HepG2 (cell line): ENCODE measurements at regions of chr6 and their contacts with region 1.

Region 1: GRCh38 chr6:47073125-47074110 is 31.3 kb upstream of the ADGRF1 start:
- DNase-seq: peak; percentile 99
- ATAC-seq: peak; percentile 75
- H3K4me3 ChIP-seq: peak overlapping the region in 1 of 3 experiments; percentile 6; a peak in 1 of 6 replicates
- H3K27ac ChIP-seq: peak overlapping the region; percentile 93
- H3K4me1 ChIP-seq: peaks cover 73% of the 10 kb centered on the region
- H3K27me3 ChIP-seq: no peaks in the 10 kb centered on the region
- CTCF ChIP-seq: peak; percentile 77
- EP300 ChIP-seq: peak; percentile 98 to 100
- POLR2A ChIP-seq: no peak
- RAD21 ChIP-seq: peak; percentile 64

Region 2: DNA sequence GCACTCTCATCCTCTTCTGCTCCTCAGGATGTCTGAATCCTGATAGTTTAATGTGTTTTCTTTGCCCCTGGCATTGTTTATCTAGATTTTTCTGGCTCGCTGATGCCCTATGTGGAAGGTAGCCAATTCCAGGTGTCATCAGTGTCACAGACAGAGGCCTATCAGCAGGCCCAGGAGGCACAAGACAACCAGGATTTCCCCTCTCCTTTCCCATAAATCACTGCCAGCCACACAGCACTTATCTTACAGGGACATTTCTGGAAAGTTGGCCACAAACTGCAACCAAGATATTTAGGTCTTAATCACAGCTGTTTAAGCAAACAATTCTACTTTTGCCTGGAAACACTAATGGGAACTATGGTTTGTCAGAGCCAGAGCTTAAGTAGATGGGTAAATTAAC is 179.8 kb before region 1 on chr6:
- CTCF ChIA-PET with region 1: no interaction called
- POLR2A ChIA-PET with region 1: no interaction called
- in situ Hi-C with region 1: no loop called
- intact Hi-C with region 1: no loop called
- DNase-seq: no peak
- ATAC-seq: no peak
- H3K4me3 ChIP-seq: no peak overlapping the region
- H3K27ac ChIP-seq: no peak overlapping the region
- H3K4me1 ChIP-seq: no peaks in the 10 kb centered on the region
- H3K27me3 ChIP-seq: peaks cover 2 to 11% of the 10 kb centered on the region in 2 experiments; a peak in 2 of 5 replicates
- CTCF ChIP-seq: no peak
- EP300 ChIP-seq: no peak
- POLR2A ChIP-seq: no peak
- RAD21 ChIP-seq: no peak

Region 3: GRCh38 chr6:47047479-47048407 is 25.7 kb before region 1 on chr6:
- CTCF ChIA-PET with region 1: interaction called, 3 read pairs
- POLR2A ChIA-PET with region 1: interaction called, 13 read pairs
- in situ Hi-C with region 1: no loop called
- intact Hi-C with region 1: loop called (anchors 1 kb)
- DNase-seq: peak; percentile 95
- ATAC-seq: peak; percentile 97
- H3K4me3 ChIP-seq: peak overlapping the region in 1 of 3 experiments; percentile 26; a peak in 1 of 6 replicates
- H3K27ac ChIP-seq: no peak overlapping the region
- H3K4me1 ChIP-seq: peaks cover 28% of the 10 kb centered on the region
- H3K27me3 ChIP-seq: peaks cover 2 to 4% of the 10 kb centered on the region in 2 experiments; a peak in 2 of 5 replicates
- CTCF ChIP-seq: peak; percentile 96
- EP300 ChIP-seq: peak in 1 of 2 experiments; percentile 31; a peak in 1 of 4 replicates
- POLR2A ChIP-seq: no peak
- RAD21 ChIP-seq: peak; percentile 82

Region 4: DNA sequence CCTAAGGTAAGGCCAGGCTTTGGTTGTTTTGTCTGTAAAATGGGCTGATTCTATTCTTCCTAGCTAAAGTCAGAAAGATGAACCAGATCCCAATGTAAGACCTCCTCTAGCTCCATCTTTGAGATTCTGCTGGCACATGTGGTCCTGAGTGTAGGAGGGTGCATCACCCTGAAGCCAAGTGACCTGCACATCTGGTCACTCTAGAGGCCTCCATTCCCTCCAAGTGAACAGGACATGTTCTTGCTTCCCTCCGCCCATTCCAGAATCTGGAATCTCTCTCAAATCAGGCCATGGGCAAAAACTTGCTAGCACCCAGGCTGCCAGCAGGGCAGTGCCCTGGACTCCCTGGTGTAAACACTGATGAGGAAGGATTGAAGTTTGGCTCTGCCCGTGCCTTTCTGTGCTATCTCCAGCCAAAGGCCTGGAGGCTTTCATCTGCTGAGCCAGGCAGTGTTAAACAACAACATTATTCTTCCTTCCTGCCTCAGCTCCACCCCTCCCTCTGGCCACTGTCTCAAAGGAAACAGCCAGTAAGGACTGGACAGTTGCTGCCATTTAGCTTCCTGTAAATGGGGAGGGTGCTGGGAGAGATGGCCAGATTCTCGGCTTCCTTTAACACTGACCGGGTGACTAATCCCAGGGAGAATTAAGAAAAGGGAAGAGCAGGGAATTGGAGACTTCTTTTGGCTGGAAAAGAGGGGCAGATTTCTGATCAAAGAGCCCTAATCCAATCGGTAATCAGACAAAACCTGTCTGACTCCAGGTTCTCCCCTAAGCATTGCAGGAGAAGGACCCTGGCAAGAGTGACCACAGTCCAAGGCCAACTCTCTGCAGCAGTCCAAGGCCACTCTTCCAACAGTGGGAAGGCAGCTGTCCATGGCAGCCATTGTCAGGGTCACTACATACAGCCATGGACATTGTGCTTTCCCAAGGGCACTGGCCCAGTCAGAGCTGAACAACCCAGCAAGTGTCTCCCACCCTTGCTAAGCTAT is 11.8 kb before region 1 on chr6:
- CTCF ChIA-PET with region 1: no interaction called
- POLR2A ChIA-PET with region 1: interaction called, 48 read pairs
- in situ Hi-C with region 1: no loop called
- intact Hi-C with region 1: no loop called
- DNase-seq: peak; percentile 72
- ATAC-seq: peak; percentile 93
- H3K4me3 ChIP-seq: peak overlapping the region in 1 of 3 experiments; percentile 26; a peak in 2 of 6 replicates
- H3K27ac ChIP-seq: peak overlapping the region; percentile 62
- H3K4me1 ChIP-seq: peaks cover 32% of the 10 kb centered on the region
- H3K27me3 ChIP-seq: no peaks in the 10 kb centered on the region
- CTCF ChIP-seq: no peak; the same call in 1 of the 2 replicates
- EP300 ChIP-seq: peak; percentile 53 to 76; a peak in 3 of 4 replicates
- POLR2A ChIP-seq: no peak
- RAD21 ChIP-seq: no peak; the same call in 1 of the 2 replicates

Region 5: GRCh38 chr6:47083586-47084047 is 10.2 kb after region 1 on chr6:
- CTCF ChIA-PET with region 1: no interaction called
- POLR2A ChIA-PET with region 1: interaction called, 14 read pairs
- in situ Hi-C with region 1: no loop called
- intact Hi-C with region 1: no loop called
- DNase-seq: peak; percentile 86
- ATAC-seq: peak; percentile 92
- H3K4me3 ChIP-seq: no peak overlapping the region
- H3K27ac ChIP-seq: peak overlapping the region; percentile 39
- H3K4me1 ChIP-seq: peaks cover 83% of the 10 kb centered on the region
- H3K27me3 ChIP-seq: no peaks in the 10 kb centered on the region
- CTCF ChIP-seq: no peak
- EP300 ChIP-seq: peak in 1 of 2 experiments; percentile 58; a peak in 2 of 4 replicates
- POLR2A ChIP-seq: no peak
- RAD21 ChIP-seq: no peak

Region 6: DNA sequence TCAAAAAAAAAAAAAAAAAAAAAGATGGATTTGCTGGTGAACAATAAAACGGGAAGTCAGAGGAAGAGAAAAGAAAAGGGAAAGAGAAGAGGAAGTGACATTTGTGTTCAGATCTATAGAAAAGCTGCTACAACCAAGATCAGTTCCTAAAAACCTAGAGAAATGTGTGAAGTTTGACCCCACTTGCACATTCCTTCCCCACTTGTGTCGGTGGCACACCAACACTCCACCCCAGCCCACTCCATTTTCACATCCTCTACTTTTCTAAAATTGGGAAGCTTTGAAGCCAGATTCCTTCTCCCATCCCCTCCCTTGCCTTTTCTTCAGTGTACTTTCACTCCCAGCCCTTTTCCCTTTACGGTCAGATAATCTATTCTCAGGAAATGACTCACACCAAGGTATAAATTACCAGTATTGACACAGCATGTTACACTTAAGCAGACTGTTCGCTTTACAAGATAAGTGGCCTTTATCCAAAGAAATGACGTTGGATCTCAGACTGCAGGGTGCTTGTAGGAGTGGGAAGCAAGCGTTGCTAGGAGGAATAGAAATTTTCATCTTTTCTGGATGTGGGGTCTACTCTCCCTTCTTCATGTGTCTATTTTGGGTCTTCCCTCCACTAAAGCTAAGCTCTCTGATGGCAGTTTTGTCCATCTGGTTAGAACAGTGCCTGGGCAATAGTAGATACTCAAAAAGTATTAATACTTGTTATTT is 61.2 kb after region 1 on chr6:
- CTCF ChIA-PET with region 1: no interaction called
- POLR2A ChIA-PET with region 1: interaction called, 4 read pairs
- in situ Hi-C with region 1: no loop called
- intact Hi-C with region 1: loop called (anchors 1 kb)
- DNase-seq: peak; percentile 91
- ATAC-seq: peak; percentile 77
- H3K4me3 ChIP-seq: peak overlapping the region in 2 of 3 experiments; percentile 7; a peak in 2 of 6 replicates
- H3K27ac ChIP-seq: peak overlapping the region; percentile 74
- H3K4me1 ChIP-seq: peaks cover 84% of the 10 kb centered on the region
- H3K27me3 ChIP-seq: no peaks in the 10 kb centered on the region
- CTCF ChIP-seq: no peak
- EP300 ChIP-seq: peak in 1 of 2 experiments; percentile 97; a peak in 2 of 4 replicates
- POLR2A ChIP-seq: no peak
- RAD21 ChIP-seq: no peak

Region 7: GRCh38 chr6:47477497-47478232 is 404.2 kb after region 1 on chr6 and contains the start of gene CD2AP:
- CTCF ChIA-PET with region 1: no interaction called
- POLR2A ChIA-PET with region 1: interaction called, 13 read pairs
- in situ Hi-C with region 1: no loop called
- intact Hi-C with region 1: loop called (anchors 5 kb)
- DNase-seq: peak; percentile 84
- ATAC-seq: peak; percentile 94
- H3K4me3 ChIP-seq: peak within 1 kb of the TSS; percentile 91 to 94 (median 93)
- H3K27ac ChIP-seq: peak within 1 kb of the TSS; percentile 93
- H3K4me1 ChIP-seq: peaks cover 40% of the 10 kb centered on the region
- H3K27me3 ChIP-seq: no peaks in the 10 kb centered on the region; a peak in 1 of 5 replicates
- CTCF ChIP-seq: peak; percentile 48
- EP300 ChIP-seq: no peak; a peak in 1 of 4 replicates
- POLR2A ChIP-seq: peak; percentile 81 to 85
- RAD21 ChIP-seq: peak; percentile 43; the same call in 1 of the 2 replicates
- total RNA-seq, gene CD2AP: 31.9 and 40.1 TPM in 2 replicates